Dendritic cell treated with granulocyte-macrophage colony-stimulating factor and Interleukin-4, amounts not matched to agents 40 ng/mL and 50 ng/mL, for 4 days (primary cell): ENCODE measurements at regions of chr11 and their contacts with region 1.

Region 1: DNA sequence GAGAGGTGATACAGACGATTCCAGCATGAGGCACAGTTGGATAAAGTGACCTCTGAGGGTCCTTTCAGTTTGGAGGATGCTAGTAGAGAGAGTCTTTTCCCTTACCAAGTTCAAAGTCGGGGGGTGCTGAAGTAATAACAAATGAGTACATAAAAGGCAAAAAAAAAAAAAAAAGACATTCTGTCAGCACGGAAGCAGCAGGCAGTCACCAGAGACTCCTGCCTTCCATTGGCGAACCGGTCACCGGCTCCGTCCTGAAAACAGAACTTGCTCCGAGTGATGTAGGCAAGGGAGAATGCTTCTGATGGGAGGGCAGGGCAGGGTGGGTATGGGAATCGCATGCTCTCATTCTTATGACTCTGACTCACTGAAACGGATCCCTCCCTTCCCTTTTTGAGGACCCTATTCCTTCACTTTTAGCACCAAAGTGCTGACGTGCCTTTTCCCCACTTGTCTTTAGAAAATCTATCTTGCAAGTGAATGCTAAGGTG is 65.9 kb downstream of the PRR5L start:
- H3K4me3 Mint-ChIP-seq: peak overlapping the region; percentile 4
- H3K27ac Mint-ChIP-seq: peak overlapping the region; percentile 66
- H3K4me1 Mint-ChIP-seq: peaks cover 58% of the 10 kb centered on the region
- H3K27me3 Mint-ChIP-seq: peaks cover 32% of the 10 kb centered on the region

Region 2: GRCh38 chr11:35765211-35765610 is 596.7 kb before region 1 on chr11:
- intact Hi-C with region 1: no loop called
- H3K4me3 Mint-ChIP-seq: no peak overlapping the region
- H3K27ac Mint-ChIP-seq: no peak overlapping the region
- H3K4me1 Mint-ChIP-seq: no peaks in the 10 kb centered on the region
- H3K27me3 Mint-ChIP-seq: no peaks in the 10 kb centered on the region

Region 3: DNA sequence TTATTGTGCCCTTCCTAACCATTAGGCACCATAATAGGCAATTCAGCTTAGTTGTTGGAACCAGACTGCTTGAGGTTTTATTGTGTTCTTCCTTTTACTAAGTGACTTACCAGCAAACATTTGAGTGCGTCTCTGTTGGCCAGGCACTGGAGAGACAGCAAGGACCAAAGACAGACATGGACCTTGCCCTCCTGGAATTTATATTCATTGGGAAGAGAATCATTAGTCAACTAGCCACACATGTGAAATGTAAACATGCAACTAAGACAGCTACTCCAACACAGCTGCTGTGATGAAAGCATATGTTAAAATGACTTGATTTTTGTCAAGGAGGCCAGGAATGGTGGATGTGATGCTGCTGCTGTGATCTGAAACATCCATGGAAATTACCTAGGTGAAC is 41.7 kb after region 1 on chr11:
- intact Hi-C with region 1: loop called (anchors 2 kb)
- H3K4me3 Mint-ChIP-seq: no peak overlapping the region
- H3K27ac Mint-ChIP-seq: no peak overlapping the region
- H3K4me1 Mint-ChIP-seq: peaks cover 46% of the 10 kb centered on the region
- H3K27me3 Mint-ChIP-seq: peaks cover 79% of the 10 kb centered on the region